ENCODE measurements at regions of chr1 and their contacts with region 1.

Region 1: GRCh38 chr1:84506002-84506728 is at the starts of genes GNG5 and SPATA1:
- DNase-seq: peak; percentile 98 to 99 (median 98)
- H3K4me3 ChIP-seq: peak within 1 kb of the TSS in 3 of 4 donors; percentile 47 to 82 (median 59)
- H3K27ac ChIP-seq: peak within 1 kb of the TSS; percentile 92 to 99 (median 94)
- H3K4me1 ChIP-seq: peaks cover 13 to 32% of the 10 kb centered on the region in 2 donors
- H3K27me3 ChIP-seq: no peaks in the 10 kb centered on the region
- CTCF ChIP-seq: no peak
- POLR2A ChIP-seq: peak; percentile 85 to 91
- total RNA-seq, gene GNG5: 34.0 to 81.5 (median 72.4) TPM
- total RNA-seq, gene SPATA1: 0.29 to 1.5 (median 0.91) TPM in 5 of 9 donors, not detected in the others

Region 2: DNA sequence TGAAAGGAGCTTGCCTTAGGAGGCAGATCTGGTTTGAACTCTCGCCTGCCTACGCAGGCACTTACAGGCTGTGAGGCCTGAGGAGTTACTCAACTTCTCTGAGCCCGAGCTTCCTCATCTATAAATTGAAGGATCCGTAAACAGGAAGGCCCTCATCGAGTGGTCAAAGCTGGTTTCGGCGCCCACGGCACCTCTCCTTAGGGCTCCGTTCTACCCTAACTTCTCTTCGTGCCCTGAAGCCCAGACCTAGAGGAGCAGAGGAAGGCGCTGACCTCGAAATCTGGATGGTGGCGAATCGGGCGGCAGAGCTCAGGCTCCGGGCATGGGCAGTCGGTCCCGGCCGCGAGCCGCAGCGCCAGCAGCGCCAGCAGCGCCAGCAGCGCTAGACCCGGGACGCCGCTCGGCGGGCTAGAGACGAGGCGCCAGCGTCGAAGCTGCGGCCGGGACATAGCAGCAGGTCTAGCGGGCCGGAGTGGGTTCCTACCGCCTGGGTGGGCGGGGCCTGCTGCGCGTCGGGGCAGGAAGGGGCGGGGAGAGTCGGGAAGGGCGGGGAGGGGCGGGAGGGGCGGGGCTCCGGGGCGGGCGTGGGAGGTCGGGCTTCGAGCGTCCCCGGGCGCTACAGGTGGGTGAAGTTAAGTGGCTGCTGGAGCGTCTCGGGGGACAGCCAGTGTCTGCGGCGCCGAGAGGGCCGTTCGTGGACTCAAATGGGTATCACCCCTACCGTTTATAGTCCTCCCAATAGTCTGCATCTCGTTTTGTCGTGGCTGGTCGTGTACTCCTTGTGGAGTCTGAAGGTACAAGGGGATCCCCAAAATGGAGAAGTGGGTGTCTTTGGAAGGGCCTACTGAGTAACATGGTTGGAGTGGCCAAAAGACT is 68.0 kb after region 1 on chr1 and contains the start of gene CTBS:
- intact Hi-C with region 1: loop called in 1 of 2 experiments (anchors 10 kb)
- DNase-seq: peak; percentile 87 to 92 (median 90)
- H3K4me3 ChIP-seq: peak within 1 kb of the TSS; percentile 51 to 92 (median 72)
- H3K27ac ChIP-seq: peak within 1 kb of the TSS; percentile 93 to 99 (median 99)
- H3K4me1 ChIP-seq: peaks cover 21 to 34% of the 10 kb centered on the region in 2 donors
- H3K27me3 ChIP-seq: no peaks in the 10 kb centered on the region
- CTCF ChIP-seq: peak in 1 of 6 experiments; percentile 9
- POLR2A ChIP-seq: peak; percentile 66 to 88
- total RNA-seq, gene CTBS: 11.1 to 45.2 (median 28.9) TPM